Mucosa of descending colon (tissue), 3 donors: ENCODE measurements at regions of chr14 and their contacts with region 1.

Region 1: DNA sequence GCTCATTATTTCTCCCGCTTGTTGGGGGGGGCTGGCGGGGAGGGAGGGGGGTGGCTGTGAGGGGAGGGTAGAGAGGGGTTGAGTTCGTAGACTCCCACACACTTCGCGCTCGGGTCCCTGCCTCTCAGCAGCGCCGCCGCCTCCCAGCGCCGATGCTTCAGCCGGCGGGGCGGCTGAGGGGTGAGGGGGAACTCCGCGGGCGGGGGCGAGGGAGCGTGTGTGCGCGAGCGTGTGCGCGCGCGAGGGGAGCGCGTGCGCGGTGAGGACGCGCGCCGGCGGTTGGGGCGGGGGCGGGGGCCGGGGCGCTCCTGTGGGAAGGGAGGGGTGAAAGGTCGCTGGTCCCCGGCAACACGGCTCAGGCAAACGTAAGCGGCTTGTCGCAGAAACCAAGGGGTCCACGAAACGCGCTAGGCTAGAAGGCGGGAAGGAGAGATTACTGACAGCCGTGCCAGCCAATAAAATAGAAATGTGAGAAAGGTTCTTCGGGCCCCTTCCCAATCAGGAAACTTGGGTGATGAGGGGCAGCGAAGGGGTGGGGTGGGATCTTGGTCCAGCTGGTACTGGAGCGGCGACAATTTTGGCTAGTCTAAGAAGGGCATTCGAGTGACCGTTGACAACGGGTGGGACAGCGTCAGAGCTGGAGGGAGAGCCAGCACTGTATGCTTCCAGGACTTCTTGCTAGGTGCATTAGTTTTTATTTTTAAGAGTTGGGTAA is 405 bp upstream of the NOVA1 start:
- DNase-seq: peak; percentile 73 to 75 (median 75)
- ATAC-seq: peak; percentile 89
- H3K4me3 ChIP-seq: peak overlapping the region; percentile 25
- H3K4me1 ChIP-seq: peaks cover 7% of the 10 kb centered on the region
- CTCF ChIP-seq: no peak

Region 2: DNA sequence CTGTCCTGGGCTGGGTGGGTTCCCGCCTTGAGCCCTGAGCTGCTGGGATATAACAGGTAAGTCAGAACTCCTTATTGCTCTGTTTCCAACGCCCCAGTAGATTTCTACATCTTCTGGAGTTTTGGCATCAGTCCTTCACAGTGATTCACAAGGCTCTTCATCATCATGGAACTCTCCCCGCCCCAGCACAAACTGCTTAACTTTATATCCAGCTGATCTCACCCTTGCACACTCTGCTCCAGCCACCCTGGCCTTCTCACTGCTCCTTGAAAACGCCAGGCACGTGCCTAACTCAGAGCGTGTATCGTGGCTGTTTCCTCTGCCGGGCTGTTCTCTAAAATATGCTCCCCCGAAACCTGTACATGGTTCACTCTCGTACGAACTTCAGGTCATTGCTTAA is 265.3 kb before region 1 on chr14:
- intact Hi-C with region 1: no loop called
- DNase-seq: peak in 1 of 3 donors; percentile 11
- ATAC-seq: peak; percentile 33
- H3K4me3 ChIP-seq: no peak overlapping the region
- H3K4me1 ChIP-seq: no peaks in the 10 kb centered on the region
- CTCF ChIP-seq: no peak

Region 3: GRCh38 chr14:26394150-26394810 is 204.0 kb before region 1 on chr14:
- intact Hi-C with region 1: loop called in 1 of 2 experiments (anchors 10 kb)
- DNase-seq: peak in 2 of 3 donors; percentile 32 to 41
- ATAC-seq: peak; percentile 44
- H3K4me3 ChIP-seq: no peak overlapping the region
- H3K4me1 ChIP-seq: no peaks in the 10 kb centered on the region
- CTCF ChIP-seq: no peak

Region 4: GRCh38 chr14:26444822-26445221 is 153.4 kb before region 1 on chr14:
- intact Hi-C with region 1: no loop called
- DNase-seq: peak in 1 of 3 donors; percentile 19
- ATAC-seq: no peak
- H3K4me3 ChIP-seq: no peak overlapping the region
- H3K4me1 ChIP-seq: no peaks in the 10 kb centered on the region
- CTCF ChIP-seq: no peak

Region 5: DNA sequence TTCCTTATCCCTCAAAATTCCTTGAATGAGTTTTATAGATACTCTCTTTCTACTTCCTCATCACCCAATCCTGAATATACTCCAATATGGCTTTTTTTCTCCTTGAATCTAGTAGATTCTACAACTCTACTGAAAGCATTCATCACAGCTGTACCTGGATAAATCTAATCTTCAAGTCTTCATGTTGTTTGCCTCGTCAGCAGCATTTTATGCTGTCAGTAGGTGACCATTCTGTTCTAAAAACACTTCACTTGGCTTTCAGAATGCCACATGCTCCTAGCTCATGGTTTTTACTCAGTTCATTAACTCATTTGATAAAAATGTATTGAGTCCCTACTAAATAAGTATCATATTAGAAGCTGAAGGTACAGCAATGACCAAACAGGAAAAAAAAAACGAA is 113.7 kb before region 1 on chr14:
- intact Hi-C with region 1: no loop called
- DNase-seq: no peak
- ATAC-seq: no peak
- H3K4me3 ChIP-seq: no peak overlapping the region
- H3K4me1 ChIP-seq: no peaks in the 10 kb centered on the region
- CTCF ChIP-seq: no peak

Region 6: GRCh38 chr14:26499546-26499945 is 98.7 kb before region 1 on chr14:
- intact Hi-C with region 1: no loop called
- DNase-seq: no peak
- ATAC-seq: no peak
- H3K4me3 ChIP-seq: no peak overlapping the region
- H3K4me1 ChIP-seq: no peaks in the 10 kb centered on the region
- CTCF ChIP-seq: no peak